ENCODE measurements at regions of chr20 and their contacts with region 1.

Region 1: DNA sequence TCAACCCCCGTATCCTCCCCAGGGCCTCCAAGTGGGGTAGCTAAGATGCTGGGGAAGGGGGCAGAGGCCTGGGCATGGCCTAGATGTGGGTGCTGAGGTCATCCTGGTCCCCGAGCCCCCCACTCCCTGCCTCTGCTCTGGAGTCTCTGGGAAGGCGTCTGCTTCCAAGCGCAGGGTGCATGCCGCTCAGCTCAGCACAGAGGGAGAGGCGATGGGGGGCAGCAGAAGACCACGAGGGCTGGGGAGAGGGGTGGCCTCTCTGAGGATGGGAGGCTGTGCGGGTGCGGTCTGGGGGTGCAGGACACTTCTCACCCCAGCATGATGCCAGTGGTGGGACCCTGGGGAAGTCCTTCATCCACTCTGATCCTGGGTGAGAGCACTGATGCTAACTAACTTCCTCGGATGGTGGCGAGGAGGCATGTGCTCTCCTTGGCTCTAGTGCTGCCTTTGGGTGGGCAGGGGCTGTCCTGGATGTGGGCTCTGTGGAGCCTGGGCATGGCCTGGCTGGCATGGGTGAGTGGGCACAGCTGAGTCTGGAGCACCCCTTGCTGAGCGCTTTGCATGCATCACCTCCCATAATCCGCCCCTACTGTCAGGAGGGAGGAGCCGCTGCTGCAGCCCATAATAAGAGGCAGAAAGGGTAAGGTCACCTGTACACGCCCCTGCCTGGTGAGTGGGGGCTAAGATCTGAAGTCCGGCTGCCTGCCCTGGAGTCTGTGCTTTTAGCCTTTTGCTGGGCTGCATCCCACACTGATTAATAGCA is 34.7 kb downstream of the EFCAB8 start:
- DNase-seq: no peak
- ATAC-seq: peak; percentile 37; the same call in 1 of the 2 replicates
- H3K4me3 ChIP-seq: no peak overlapping the region
- H3K27ac ChIP-seq: no peak overlapping the region
- H3K4me1 ChIP-seq: no peaks in the 10 kb centered on the region
- H3K27me3 ChIP-seq: no peaks in the 10 kb centered on the region
- CTCF ChIP-seq: no peak

Region 2: GRCh38 chr20:32792316-32792715 is 101.1 kb before region 1 on chr20:
- CTCF ChIA-PET with region 1: no interaction called
- POLR2A ChIA-PET with region 1: interaction called, 19 read pairs
- in situ Hi-C with region 1: no loop called
- intact Hi-C with region 1: no loop called
- DNase-seq: no peak
- ATAC-seq: no peak
- H3K4me3 ChIP-seq: no peak overlapping the region
- H3K27ac ChIP-seq: no peak overlapping the region
- H3K4me1 ChIP-seq: no peaks in the 10 kb centered on the region
- H3K27me3 ChIP-seq: no peaks in the 10 kb centered on the region
- CTCF ChIP-seq: no peak

Region 3: DNA sequence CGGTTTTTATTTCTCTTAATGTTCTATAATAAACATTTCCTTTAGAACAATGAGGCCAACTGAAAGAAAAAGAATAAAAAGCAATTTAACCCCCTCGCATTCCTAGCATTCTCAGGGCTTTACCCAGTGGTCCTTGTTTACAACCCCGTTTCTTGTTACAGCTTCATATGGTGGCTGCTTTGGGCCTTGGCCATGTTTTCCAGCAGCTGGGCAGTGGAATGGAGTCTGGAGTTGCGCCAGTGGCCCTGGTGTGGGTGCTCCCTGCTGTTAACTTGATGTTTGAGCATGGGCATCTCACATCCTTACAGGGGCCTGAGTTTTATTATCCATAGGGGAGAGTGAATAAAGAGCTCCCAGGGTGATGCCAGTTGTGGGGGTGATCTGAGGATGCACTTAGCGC is 15.9 kb before region 1 on chr20:
- CTCF ChIA-PET with region 1: no interaction called
- POLR2A ChIA-PET with region 1: no interaction called
- in situ Hi-C with region 1: no loop called
- intact Hi-C with region 1: no loop called
- DNase-seq: no peak
- ATAC-seq: no peak
- H3K4me3 ChIP-seq: no peak overlapping the region
- H3K27ac ChIP-seq: no peak overlapping the region
- H3K4me1 ChIP-seq: no peaks in the 10 kb centered on the region
- H3K27me3 ChIP-seq: no peaks in the 10 kb centered on the region
- CTCF ChIP-seq: no peak